HCT116 (cell line): ENCODE measurements at regions of chr4 and their contacts with region 1.

Region 1: GRCh38 chr4:162645381-162645780 is 481.6 kb upstream of the FSTL5 start:
- DNase-seq: no peak
- ATAC-seq: no peak
- H3K4me3 ChIP-seq: no peak overlapping the region
- H3K27ac ChIP-seq: no peak overlapping the region
- H3K4me1 ChIP-seq: no peaks in the 10 kb centered on the region
- H3K27me3 ChIP-seq: no peaks in the 10 kb centered on the region
- CTCF ChIP-seq: peak in 2 of 3 experiments; percentile 17 to 39; a peak in 3 of 6 replicates
- POLR2A ChIP-seq: no peak
- RAD21 ChIP-seq: peak; percentile 51

Region 2: DNA sequence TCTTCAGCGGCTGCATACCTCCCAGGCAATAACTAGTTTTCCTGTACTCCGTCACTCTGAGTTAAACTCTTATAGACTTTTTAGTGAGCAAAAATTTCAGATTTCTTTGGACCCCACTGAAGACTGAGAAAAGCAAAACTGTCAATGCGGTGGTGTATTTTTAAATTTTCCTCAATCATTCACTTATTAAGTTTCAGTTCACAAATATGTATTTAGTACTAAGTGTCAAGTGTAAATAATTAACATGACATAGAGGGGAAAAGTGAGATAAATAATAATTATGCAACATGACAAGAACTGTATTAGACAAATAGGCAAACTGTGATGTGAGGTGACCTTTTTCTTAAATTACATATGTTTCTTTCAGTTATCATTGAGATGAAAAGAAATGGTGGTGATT is 396.9 kb after region 1 on chr4:
- CTCF ChIA-PET with region 1: interaction called, 9 read pairs
- POLR2A ChIA-PET with region 1: no interaction called
- RAD21 ChIA-PET with region 1: interaction called in 1 of 2 experiments, 4 read pairs
- intact Hi-C with region 1: loop called (anchors 10 kb)
- DNase-seq: no peak
- ATAC-seq: no peak
- H3K4me3 ChIP-seq: no peak overlapping the region
- H3K27ac ChIP-seq: no peak overlapping the region
- H3K4me1 ChIP-seq: no peaks in the 10 kb centered on the region
- H3K27me3 ChIP-seq: no peaks in the 10 kb centered on the region
- CTCF ChIP-seq: no peak
- POLR2A ChIP-seq: no peak
- RAD21 ChIP-seq: no peak